Natural killer cell (primary cell): ENCODE measurements at regions of chr10 and their contacts with region 1.

Region 1: DNA sequence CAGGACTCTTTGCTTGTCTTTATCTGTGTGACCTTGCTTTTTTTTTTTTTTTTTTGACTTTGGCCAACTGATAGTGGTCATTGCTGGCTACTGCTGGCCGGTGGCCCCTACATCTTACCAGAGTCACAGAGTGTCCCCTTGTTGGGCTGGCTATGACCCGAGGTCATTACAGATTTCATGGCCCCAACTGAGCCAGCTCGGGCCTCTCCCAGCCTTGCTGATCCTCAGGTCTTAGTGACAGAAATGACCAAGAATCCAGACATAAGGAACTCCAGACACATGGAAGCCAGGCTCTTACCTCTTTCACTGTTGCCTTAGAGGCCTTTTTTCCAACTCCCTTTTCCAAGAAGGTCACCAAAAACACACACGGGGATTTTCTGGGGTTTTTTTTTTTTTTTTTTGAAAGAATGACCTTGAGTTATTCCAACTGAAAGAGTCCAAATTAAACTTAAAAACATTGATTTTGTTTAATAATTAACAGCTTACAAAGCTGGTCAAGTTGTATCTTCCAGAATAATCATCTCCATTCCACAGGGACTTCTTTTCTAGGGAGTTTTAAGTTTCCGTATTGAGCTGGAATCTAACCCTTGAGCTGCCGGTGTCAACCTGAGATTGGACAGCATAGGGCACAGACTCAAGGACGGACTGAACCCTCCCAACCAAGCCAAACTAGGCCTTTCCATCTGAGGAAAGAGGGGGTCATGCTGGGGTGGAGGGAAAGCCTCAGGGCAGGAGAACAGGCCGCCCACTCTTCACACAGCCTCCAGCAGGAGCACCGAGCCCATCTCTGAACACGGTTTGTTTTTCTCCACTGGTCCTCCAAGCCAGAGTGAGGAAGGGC is 43.8 kb downstream of the PIK3AP1 start:
- DNase-seq: no peak
- ATAC-seq: no peak
- H3K4me3 ChIP-seq: no peak overlapping the region
- H3K4me3 Mint-ChIP-seq: peak overlapping the region; percentile 80
- H3K27ac ChIP-seq: peak overlapping the region; percentile 82
- H3K27ac Mint-ChIP-seq: peak overlapping the region; percentile 94 to 99
- H3K4me1 ChIP-seq: peaks cover 78% of the 10 kb centered on the region
- H3K4me1 Mint-ChIP-seq: peaks cover 76 to 82% of the 10 kb centered on the region in 2 donors
- H3K27me3 ChIP-seq: no peaks in the 10 kb centered on the region
- H3K27me3 Mint-ChIP-seq: no peaks in the 10 kb centered on the region
- CTCF ChIP-seq: no peak

Region 2: GRCh38 chr10:96257944-96258343 is 418.5 kb before region 1 on chr10:
- intact Hi-C with region 1: no loop called
- DNase-seq: no peak
- ATAC-seq: no peak
- H3K4me3 ChIP-seq: no peak overlapping the region
- H3K4me3 Mint-ChIP-seq: no peak overlapping the region
- H3K27ac ChIP-seq: no peak overlapping the region
- H3K27ac Mint-ChIP-seq: no peak overlapping the region
- H3K4me1 ChIP-seq: peaks cover 6% of the 10 kb centered on the region
- H3K4me1 Mint-ChIP-seq: no peaks in the 10 kb centered on the region
- H3K27me3 ChIP-seq: no peaks in the 10 kb centered on the region
- H3K27me3 Mint-ChIP-seq: peaks cover 0 to 2% of the 10 kb centered on the region in 2 donors
- CTCF ChIP-seq: no peak

Region 3: GRCh38 chr10:96271016-96271829 is 405.3 kb before region 1 on chr10 and contains the start of gene BLNK:
- intact Hi-C with region 1: no loop called
- DNase-seq: no peak
- ATAC-seq: no peak
- H3K4me3 ChIP-seq: peak within 1 kb of the TSS; percentile 50
- H3K4me3 Mint-ChIP-seq: no peak within 1 kb of the TSS
- H3K27ac ChIP-seq: peak within 1 kb of the TSS; percentile 43
- H3K27ac Mint-ChIP-seq: no peak within 1 kb of the TSS
- H3K4me1 ChIP-seq: peaks cover 3% of the 10 kb centered on the region
- H3K4me1 Mint-ChIP-seq: no peaks in the 10 kb centered on the region
- H3K27me3 ChIP-seq: no peaks in the 10 kb centered on the region
- H3K27me3 Mint-ChIP-seq: peaks cover 11 to 14% of the 10 kb centered on the region in 2 donors
- CTCF ChIP-seq: no peak
- total RNA-seq, gene BLNK: 0.66 to 4.0 (median 1.5) TPM

Region 4: DNA sequence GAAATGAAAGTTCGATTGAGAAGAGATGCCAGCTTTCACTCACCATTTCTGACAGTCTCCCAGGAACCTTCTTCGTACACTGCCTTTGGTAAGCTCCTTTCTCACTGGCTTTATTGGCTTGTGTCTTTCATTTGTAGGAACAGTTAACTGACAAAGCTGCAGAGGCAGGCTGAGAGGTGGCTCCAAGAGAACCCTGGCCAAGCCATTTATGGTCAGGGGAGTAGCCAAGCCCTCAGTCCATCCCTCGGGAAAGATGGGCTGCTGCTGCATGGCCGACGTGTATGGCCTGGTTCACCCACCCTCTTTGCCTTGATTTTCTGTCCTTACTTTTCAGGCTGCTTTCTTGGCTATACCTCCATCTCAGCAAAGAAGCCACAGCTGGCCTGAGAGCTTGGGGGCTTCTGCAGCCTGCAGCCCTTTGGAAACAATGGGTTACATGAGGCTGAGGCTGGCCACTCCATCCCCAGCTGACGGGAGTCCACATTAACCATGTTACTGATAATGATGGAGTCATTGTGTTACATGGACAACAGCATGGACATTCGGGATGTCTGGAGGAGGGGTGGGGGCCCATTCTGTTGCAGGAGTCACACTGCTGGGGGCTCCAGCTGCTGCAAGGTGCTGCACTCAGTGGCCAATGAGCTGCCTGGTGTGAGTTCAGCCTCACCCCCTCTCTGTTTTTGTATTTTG is 317.5 kb before region 1 on chr10 and contains the start of gene OPALIN:
- intact Hi-C with region 1: no loop called
- DNase-seq: no peak
- ATAC-seq: no peak
- H3K4me3 ChIP-seq: no peak within 1 kb of the TSS
- H3K4me3 Mint-ChIP-seq: no peak within 1 kb of the TSS
- H3K27ac ChIP-seq: no peak within 1 kb of the TSS
- H3K27ac Mint-ChIP-seq: no peak within 1 kb of the TSS
- H3K4me1 ChIP-seq: no peaks in the 10 kb centered on the region
- H3K4me1 Mint-ChIP-seq: no peaks in the 10 kb centered on the region
- H3K27me3 ChIP-seq: no peaks in the 10 kb centered on the region
- H3K27me3 Mint-ChIP-seq: peaks cover 11 to 28% of the 10 kb centered on the region in 2 donors
- CTCF ChIP-seq: no peak
- total RNA-seq, gene OPALIN: not detected

Region 5: DNA sequence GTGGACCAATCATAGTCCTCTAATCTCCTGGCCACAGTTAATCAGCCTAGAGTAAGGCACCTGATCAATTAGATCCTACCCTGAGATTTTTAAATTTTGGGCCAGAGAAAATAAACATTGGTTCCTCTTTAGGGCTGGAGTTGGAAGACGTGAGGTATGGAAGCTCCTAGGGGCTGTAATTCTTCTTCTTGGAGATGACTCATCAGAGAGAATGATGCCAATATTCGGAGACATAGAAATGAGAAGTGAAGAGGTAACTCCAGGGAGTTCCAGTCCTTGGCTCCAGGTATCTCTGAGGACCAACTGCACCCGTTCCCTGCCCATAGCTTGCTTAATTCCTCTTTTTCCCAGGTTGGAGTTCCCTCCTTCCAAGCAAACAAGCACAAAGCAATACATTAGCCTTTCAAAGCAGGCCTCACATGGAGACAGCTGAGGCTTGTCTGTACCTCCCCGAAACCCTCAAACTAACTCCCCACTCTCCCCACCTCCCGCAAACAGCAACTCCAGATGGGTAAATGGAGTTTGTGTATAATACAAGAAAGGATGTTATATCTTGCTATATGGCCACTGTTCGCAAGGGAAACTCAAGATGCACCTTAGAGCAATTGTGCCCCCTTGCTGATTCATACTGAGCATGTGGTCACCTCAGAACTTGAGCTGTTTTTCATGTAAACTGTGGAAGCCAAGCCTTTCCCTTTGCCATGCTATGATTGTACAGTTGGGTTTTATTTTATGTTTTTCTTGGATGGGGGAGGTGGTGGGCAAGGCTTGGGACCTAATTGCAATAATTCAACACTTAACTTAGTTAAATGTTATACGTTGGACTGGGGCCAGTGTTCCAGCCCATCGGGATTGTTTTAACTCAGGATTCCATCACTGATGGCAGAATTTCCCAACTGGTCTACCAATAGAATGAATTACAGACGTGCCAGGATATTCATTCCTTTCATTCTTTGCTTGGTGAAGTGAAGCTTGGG is 14.6 kb after region 1 on chr10:
- intact Hi-C with region 1: loop called (anchors 1 kb)
- DNase-seq: peak in 1 of 2 donors; percentile 30
- ATAC-seq: no peak
- H3K4me3 ChIP-seq: no peak overlapping the region
- H3K4me3 Mint-ChIP-seq: peak overlapping the region; percentile 2
- H3K27ac ChIP-seq: no peak overlapping the region
- H3K27ac Mint-ChIP-seq: peak overlapping the region; percentile 56 to 98
- H3K4me1 ChIP-seq: peaks cover 61% of the 10 kb centered on the region
- H3K4me1 Mint-ChIP-seq: peaks cover 80 to 84% of the 10 kb centered on the region in 2 donors
- H3K27me3 ChIP-seq: no peaks in the 10 kb centered on the region
- H3K27me3 Mint-ChIP-seq: no peaks in the 10 kb centered on the region
- CTCF ChIP-seq: peak; percentile 13